Caki2 (cell line): ENCODE measurements at regions of chr17 and their contacts with region 1.

Region 1: DNA sequence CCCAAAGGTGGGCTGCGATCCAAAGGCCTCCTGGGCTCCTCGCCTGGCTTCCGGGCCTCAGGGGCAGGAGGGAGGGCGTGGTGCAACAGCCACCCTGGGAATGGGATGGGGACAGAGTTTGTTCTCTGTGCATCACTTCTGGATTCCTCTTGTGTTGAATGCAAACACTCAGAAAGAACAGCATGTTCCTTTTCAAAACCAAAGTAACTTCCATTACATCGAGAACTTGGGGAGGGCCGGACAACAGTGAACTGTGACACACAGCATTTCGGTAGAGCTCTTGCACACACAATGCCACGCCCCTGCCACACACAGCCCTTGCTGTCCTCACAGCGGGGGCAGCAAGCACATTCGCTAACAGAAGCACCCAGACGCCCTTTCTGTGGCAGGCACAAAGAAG is 36.1 kb upstream of the FASN start:
- DNase-seq: no peak

Region 2: DNA sequence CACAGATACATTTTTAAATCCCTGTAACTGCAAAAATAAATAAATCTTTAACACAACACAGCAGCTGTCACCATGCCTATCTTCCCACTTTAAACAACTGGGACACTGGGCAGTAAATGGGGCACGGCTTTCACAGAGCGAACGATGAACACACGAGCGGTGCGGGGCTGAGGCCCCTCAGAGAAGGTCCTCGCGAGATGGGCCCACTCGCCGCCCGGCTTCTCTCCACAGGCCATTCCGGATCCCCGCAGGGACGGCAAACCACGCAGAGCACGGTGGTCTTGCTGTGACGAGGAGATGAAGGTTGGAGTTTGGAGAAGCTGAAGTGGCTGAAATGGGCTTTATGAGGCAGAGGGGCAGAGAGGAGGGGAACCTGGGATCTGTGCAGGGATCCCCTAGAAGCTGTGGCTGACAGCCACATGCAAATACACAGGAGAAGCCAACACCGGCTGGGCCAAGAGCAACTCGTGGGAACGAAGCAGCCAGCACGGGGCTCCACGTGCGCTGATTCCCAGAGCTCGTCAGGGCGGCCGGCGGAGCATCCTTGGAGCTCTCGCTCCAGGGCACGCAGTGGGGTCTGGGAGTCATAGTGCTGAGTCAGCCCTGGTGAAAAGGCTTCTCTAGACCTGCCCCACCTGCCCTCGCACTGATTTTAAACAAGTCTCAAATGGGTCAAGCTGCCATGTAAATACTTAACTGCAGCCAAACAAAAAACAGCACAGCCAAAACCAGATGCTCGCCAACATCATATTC is 46.9 kb after region 1 on chr17:
- in situ Hi-C with region 1: no loop called
- DNase-seq: no peak

Region 3: DNA sequence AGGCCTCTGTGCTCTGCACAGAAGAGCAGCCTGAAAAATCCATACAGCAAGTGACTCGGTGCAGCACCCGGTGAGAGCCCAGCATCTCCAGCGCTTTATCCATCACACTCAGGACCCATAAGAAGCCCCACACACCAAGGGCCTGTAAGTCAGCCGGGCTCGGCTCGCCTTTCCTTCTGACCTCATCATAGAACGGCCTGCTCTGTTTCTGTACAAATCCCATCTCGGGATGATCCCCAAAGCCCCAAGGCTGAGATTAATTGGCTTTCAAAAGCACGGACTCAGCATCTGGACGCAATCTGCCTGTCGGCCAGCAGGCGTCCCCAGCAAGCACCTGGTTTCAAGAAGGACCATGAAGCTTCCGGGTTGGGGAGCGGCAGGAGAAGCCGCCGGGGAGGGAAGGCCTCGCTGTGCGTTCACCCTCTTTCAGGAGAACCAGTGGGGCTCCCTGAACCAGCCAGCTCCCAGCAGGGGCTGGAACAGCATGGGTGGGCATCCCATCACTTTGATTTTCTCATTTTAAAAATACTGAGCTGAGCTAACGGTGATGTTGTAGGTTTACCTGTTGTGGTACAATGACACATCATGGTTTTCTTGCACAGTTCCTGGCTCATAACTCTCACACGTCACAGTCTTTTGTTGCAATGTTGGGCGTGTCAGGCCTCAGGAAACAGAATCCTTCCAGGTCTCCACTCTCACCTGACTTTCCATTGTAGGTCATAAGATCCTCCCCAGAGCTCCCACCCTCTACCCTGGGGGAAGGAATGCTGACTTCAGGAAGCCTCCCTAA is 71.8 kb after region 1 on chr17:
- in situ Hi-C with region 1: loop called (anchors 10 kb)
- DNase-seq: peak; percentile 89

Region 4: DNA sequence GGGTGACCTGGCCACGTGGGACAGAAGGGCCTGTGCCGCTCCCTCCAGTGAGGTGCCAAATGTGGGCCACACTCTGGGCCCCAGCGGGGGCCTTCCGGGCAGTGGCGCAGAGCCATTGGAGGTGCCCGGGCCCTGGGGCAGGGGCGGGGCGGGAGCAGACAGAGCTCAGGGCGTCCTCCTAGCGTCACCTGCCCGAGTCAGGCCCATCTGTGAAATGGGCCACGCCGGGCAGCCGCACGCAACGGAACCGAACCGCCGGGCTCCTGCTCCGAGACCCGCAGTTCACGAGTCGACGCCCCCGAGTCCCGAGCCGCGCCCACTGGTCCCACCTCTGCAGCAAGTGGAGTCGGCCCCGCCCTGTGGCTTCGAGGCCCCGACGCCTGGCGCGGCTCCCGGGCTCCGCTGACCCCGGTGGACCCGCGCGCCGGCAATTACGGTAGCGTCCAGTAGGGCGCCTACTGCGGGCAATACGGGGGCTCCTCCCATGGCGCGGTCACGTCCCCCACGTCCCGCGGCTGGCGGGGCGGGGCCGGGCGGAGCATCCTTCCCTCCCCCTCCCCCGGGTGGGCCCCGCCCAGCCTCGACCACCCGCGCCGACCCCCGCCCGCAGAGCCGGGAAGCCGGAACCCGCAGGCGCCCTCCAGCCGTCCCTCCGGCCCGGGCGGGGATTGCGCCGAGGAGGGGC is 96.7 kb after region 1 on chr17:
- in situ Hi-C with region 1: no loop called
- DNase-seq: peak; percentile 95

Region 5: DNA sequence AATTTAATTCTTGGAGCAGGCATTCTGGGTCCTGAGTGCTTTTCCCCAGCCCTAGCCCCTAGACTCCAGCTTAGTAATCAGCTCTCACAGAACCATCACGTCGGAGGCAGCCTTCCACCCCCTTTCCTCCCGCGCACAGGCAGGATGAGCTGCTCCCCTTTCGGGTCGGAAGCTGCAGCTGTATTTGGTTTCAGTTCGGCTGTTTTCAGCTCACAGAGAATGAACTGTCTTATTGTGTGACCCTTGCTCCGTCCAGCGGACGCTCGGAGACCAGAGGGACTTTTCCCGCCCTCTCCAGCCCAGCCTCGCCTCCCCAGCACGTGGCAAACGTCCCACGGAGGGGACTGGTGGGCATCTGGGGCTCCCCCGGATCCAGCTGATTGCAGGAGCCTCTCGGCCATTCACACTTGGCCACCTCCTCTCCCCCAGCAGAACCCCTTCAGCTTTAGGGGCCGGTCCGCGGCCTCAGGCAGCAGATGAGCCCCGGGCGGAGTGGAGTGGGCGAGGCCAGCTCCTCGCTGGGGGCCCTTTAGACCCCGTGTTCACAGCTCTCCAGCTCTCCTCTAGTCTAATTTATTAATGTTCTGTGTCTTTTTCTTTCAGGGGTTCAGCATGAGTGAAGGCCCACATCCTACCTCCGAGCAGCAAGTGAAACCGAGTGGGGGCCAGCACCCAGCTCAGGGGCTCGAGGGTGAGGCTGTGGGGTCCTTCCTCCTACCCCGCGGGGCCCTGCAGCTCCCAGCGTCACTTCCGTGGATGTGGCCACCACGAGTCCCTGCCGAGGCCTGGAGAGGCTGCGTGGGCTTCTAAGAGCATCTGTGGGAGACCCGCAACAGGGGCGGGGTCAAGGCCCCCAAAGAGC is 236.6 kb after region 1 on chr17:
- in situ Hi-C with region 1: no loop called
- DNase-seq: no peak